ENCODE measurements at regions of chr17 and their contacts with region 1.

Region 1: DNA sequence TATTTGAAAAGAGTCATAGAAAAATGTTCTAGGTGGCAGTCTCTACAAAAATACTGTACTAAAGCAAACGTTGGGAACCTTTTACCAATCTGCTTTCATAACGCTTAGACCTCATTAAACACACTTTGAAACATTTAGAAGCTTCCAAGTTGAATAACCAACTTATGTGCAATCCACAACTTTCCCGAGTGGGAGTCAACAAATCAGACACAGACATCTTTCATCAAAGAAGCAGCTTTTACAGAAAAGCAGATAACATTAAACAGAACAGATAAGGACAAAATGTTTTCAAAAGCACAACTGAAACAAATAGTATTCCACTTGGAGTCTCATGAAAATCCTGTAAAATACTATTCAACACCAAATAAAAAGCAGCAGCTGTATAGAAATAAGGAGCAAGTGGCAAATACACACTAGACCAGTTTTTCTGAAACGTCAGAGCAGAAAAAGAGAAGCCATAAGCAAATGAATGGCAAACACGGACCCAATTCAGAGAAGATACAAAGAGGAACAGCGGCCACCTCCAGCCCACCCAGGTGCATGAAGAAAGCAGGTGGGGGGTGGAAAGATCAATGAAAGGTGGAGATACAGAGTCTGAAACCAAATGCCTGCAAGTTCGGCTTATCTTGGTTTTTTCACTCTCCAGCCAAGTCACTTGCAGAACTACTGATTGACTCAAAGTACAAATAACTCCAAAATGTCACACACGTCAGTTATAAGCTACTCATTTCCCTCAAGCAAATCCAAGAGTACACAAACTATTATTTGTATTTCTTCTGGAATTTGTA is 18.4 kb upstream of the FBF1 start:
- DNase-seq: no peak
- ATAC-seq: no peak
- H3K4me3 ChIP-seq: no peak overlapping the region
- H3K4me3 Mint-ChIP-seq: no peak overlapping the region
- H3K27ac ChIP-seq: no peak overlapping the region
- H3K27ac Mint-ChIP-seq: no peak overlapping the region
- H3K4me1 ChIP-seq: peaks cover 0 to 4% of the 10 kb centered on the region in 2 donors
- H3K4me1 Mint-ChIP-seq: peaks cover 3% of the 10 kb centered on the region
- H3K27me3 ChIP-seq: no peaks in the 10 kb centered on the region
- H3K27me3 Mint-ChIP-seq: no peaks in the 10 kb centered on the region
- CTCF ChIP-seq: no peak

Region 2: GRCh38 chr17:75970011-75970523 is 10.8 kb after region 1 on chr17:
- CTCF ChIA-PET with region 1: interaction called, 3 read pairs
- POLR2A ChIA-PET with region 1: interaction called, 14 read pairs
- intact Hi-C with region 1: no loop called
- DNase-seq: no peak
- ATAC-seq: no peak
- H3K4me3 ChIP-seq: no peak overlapping the region
- H3K4me3 Mint-ChIP-seq: no peak overlapping the region
- H3K27ac ChIP-seq: no peak overlapping the region
- H3K27ac Mint-ChIP-seq: no peak overlapping the region
- H3K4me1 ChIP-seq: peaks cover 4 to 7% of the 10 kb centered on the region in 2 donors
- H3K4me1 Mint-ChIP-seq: peaks cover 16% of the 10 kb centered on the region
- H3K27me3 ChIP-seq: no peaks in the 10 kb centered on the region
- H3K27me3 Mint-ChIP-seq: no peaks in the 10 kb centered on the region
- CTCF ChIP-seq: no peak